Activated naive CD4-positive, alpha-beta T cell treated with anti-CD3 and anti-CD28 coated beads, Interleukin-2, amount 10 ng/mL, durations not matched to agents 7 days and 5 days (primary cell): ENCODE measurements at regions of chr14 and their contacts with region 1.

Region 1: DNA sequence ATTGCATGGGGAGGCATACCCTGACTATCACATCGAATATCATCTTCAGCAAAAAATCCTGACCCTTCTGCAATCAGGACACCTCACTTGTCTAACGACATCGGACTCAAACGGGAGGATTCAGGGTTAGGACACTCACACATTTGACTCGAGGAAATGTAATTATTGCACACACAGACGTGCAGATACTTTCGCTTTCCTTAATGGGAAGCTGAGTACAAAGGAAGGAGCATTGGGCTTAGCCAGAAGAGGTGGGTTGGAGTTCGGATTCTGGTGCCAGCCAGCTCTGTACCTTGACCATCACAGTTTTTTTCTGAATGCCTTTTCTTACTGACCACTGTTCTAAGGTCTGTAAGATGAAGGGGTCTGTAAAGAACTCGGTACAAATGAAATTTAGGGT is 260.4 kb downstream of the GALC start:
- DNase-seq: no peak
- H3K4me3 Mint-ChIP-seq: no peak overlapping the region
- H3K27ac Mint-ChIP-seq: no peak overlapping the region
- H3K4me1 Mint-ChIP-seq: no peaks in the 10 kb centered on the region
- H3K27me3 Mint-ChIP-seq: no peaks in the 10 kb centered on the region

Region 2: DNA sequence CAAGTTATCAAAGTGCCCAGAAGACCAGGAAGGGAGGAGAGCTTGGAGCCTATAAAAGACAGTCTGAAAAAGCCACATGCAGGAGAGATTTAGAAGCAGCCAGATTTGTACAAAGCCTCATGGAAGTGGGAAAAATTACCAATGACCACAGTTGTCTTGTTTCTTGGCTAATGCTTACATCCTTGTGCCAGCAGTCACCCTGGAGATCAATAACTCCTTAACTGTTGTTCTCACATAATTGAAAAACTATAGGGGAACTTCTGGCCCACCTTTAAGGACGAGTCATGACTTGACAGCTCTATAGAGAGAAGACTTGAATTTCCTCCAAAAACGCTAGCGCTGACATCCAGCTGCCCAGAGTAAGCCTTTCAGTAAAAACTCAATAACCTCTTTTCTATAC is 52.7 kb before region 1 on chr14:
- CTCF ChIA-PET with region 1: no interaction called
- DNase-seq: no peak
- H3K4me3 Mint-ChIP-seq: no peak overlapping the region
- H3K27ac Mint-ChIP-seq: no peak overlapping the region
- H3K4me1 Mint-ChIP-seq: no peaks in the 10 kb centered on the region
- H3K27me3 Mint-ChIP-seq: no peaks in the 10 kb centered on the region

Region 3: DNA sequence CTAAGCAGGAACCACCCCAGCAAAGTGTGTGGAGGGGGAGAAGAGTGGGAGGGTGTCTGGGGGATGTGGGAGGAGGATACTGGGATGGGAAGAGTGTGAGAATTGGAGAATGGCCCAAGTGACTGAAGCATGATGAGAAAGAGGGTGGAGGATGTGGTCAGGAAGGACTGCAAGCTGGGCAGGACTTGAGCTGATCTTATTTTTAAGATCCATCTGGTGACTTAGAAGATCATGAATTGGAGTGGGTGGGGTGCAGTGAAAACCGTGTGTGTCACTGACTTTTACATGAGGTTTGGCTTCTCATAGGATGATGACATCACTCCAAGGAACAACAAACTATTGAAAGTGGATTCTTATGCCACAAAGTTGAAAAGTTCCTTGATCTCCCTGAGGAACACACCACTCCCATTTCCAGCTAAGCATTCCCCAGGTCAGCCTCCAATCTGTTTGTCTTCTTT is 27.1 kb before region 1 on chr14:
- CTCF ChIA-PET with region 1: no interaction called
- DNase-seq: no peak
- H3K4me3 Mint-ChIP-seq: no peak overlapping the region
- H3K27ac Mint-ChIP-seq: no peak overlapping the region
- H3K4me1 Mint-ChIP-seq: no peaks in the 10 kb centered on the region
- H3K27me3 Mint-ChIP-seq: no peaks in the 10 kb centered on the region

Region 4: DNA sequence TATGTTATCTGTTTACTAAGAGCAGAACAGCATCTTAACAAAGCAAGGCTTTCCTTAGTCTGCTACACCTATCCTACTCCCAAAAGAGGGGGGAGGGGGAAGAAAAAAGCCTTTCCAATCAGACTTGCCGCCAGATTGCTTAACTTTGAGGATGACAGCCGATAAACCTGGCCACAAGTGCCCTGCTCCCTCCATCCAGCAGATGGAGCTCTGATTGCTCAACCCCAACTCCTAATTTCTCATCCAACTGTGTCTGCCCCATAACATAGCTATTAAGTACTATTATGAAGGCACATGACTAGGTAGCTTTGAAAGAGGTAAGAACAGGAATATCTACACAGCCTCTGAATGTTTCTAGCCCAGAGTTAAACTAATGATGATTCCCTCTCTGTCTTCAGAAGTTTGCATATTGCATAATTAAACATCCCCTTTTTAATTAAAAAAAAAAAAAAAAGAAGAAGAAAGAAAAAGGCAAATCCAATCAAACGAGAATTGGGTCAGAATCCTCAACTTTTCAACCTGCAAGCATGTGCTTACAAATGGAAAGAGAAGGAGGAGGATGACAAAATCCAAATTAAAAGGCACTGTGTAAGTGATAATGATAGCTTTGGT is 13.1 kb after region 1 on chr14:
- CTCF ChIA-PET with region 1: interaction called, 17 read pairs
- DNase-seq: peak; percentile 27
- H3K4me3 Mint-ChIP-seq: no peak overlapping the region
- H3K27ac Mint-ChIP-seq: no peak overlapping the region
- H3K4me1 Mint-ChIP-seq: no peaks in the 10 kb centered on the region
- H3K27me3 Mint-ChIP-seq: no peaks in the 10 kb centered on the region